CD8-positive, alpha-beta T cell (primary cell): ENCODE measurements at regions of chr9 and their contacts with region 1.

Region 1: GRCh38 chr9:20537269-20537668 is 85.0 kb downstream of the MLLT3 start:
- DNase-seq: no peak
- ATAC-seq: no peak
- H3K4me3 ChIP-seq: no peak overlapping the region
- H3K4me3 Mint-ChIP-seq: no peak overlapping the region
- H3K27ac ChIP-seq: no peak overlapping the region
- H3K27ac Mint-ChIP-seq: no peak overlapping the region
- H3K4me1 ChIP-seq: no peaks in the 10 kb centered on the region
- H3K4me1 Mint-ChIP-seq: peaks cover 55% of the 10 kb centered on the region
- H3K27me3 ChIP-seq: no peaks in the 10 kb centered on the region
- H3K27me3 Mint-ChIP-seq: no peaks in the 10 kb centered on the region
- CTCF ChIP-seq: no peak

Region 2: DNA sequence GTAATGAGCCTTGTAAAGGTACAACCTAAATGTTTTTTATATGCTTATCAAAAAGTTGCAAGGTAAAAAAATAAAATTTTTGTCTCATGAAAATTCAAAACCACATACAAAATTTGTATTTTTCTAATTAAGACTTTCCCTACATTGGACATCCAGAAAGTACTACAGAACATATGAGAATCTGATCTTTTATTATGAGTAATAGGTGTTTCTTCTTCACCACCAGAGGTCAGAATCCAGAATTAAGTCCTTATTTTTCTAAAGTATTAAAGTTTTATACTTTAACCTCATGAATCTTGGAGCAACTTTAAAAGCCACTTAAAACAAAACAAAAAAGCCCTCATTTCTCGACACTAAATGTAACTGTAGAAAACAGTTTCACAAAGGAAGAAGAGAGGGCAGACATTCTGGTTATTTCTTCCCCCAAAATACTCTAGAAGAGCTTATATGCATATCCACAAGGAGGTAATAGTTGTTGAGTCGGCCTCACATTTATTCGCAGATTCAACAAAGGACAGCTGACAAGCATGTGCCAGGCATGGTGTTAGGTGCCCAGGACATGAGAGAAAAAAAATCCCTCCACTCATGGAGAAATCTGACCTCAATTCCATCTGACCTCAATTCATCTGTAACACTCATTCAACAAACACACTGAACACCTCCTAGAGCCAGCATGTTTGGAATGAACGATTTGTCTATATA is 15.8 kb after region 1 on chr9:
- CTCF ChIA-PET with region 1: interaction called, 3 read pairs
- POLR2A ChIA-PET with region 1: interaction called, 4 read pairs
- intact Hi-C with region 1: loop called in 1 of 2 experiments (anchors 2 kb)
- DNase-seq: peak in 2 of 9 experiments; percentile 7 to 29
- ATAC-seq: peak; percentile 17
- H3K4me3 ChIP-seq: no peak overlapping the region
- H3K4me3 Mint-ChIP-seq: peak overlapping the region; percentile 10
- H3K27ac ChIP-seq: no peak overlapping the region
- H3K27ac Mint-ChIP-seq: peak overlapping the region; percentile 23
- H3K4me1 ChIP-seq: peaks cover 37% of the 10 kb centered on the region
- H3K4me1 Mint-ChIP-seq: peaks cover 81% of the 10 kb centered on the region
- H3K27me3 ChIP-seq: no peaks in the 10 kb centered on the region
- H3K27me3 Mint-ChIP-seq: no peaks in the 10 kb centered on the region
- CTCF ChIP-seq: peak; percentile 27

Region 3: GRCh38 chr9:20621471-20622329 is 84.4 kb after region 1 on chr9:
- CTCF ChIA-PET with region 1: no interaction called
- POLR2A ChIA-PET with region 1: no interaction called
- intact Hi-C with region 1: no loop called
- DNase-seq: peak; percentile 61 to 90 (median 78)
- ATAC-seq: peak; percentile 33
- H3K4me3 ChIP-seq: peak overlapping the region; percentile 97 to 98
- H3K4me3 Mint-ChIP-seq: peak overlapping the region; percentile 98
- H3K27ac ChIP-seq: peak overlapping the region; percentile 75 to 88
- H3K27ac Mint-ChIP-seq: peak overlapping the region; percentile 99
- H3K4me1 ChIP-seq: peaks cover 47% of the 10 kb centered on the region
- H3K4me1 Mint-ChIP-seq: peaks cover 52% of the 10 kb centered on the region
- H3K27me3 ChIP-seq: no peaks in the 10 kb centered on the region
- H3K27me3 Mint-ChIP-seq: no peaks in the 10 kb centered on the region
- CTCF ChIP-seq: no peak